Activated T-helper 1 cell treated with anti-CD3 and anti-CD28 coated beads, Interleukin-12 subunit alpha, Interleukin-12 subunit beta, Interleukin-2, Interleukin-4 antibody, amounts not matched to agents 30 ng/mL and 10 ng/mL and 1 ng/mL, durations not matched to agents 14 hours and 24 hours and 36 hours (primary cell): ENCODE measurements at regions of chr11 and their contacts with region 1.

Region 1: DNA sequence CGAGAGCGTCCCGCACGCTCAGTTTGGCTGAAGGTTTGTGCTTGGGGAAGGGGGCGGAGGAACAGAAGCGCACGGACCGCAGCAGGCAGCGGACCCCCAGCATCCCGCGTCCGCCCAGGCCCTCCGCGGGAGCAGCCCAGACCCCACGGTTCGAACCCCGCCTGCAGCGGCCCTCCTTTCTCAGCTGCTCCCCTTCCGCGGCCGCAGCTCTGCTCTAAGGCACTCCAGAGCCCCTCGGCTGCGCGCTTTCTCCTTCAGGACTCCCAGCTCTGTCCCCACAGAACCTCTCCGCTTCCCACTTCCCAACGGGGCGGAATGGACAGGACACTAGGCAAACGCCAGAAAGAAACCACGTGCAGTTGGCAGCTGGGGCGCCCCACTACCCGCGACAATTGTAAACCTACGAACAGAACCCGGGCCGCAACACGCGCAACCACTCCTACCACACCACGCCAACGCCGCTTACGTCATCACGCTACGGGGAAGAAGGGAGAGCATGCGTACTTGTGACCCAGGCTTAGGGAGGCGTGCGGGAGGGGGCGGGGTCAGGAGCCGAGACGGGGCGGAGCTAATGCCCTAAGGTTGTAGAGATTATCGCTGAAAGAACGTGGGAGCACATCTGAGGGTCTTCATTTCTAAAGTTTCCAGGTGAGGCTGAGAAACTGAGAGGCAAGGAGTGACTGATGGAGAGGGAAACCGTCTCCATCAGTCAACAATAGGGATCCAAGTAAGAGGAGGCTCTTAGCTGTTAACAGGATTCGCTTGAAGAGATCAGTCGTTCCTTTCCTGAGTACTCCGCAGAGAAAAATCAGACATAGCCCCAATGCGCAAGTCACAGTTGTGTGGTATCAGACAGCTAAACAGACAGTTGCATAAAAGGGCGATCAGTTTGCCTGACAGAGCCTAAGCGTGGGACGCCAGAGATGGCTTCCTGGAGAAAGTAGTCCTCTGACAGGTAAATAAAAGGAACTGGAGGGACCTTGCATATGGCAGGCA is at the start of gene NARS2:
- DNase-seq: peak; percentile 95
- H3K4me3 Mint-ChIP-seq: peak within 1 kb of the TSS; percentile 90
- H3K27ac Mint-ChIP-seq: peak within 1 kb of the TSS; percentile 86
- H3K4me1 Mint-ChIP-seq: peaks cover 40% of the 10 kb centered on the region
- H3K27me3 Mint-ChIP-seq: peaks cover 7% of the 10 kb centered on the region
- total RNA-seq, gene NARS2: 38.2 and 38.7 TPM in 2 replicates

Region 2: DNA sequence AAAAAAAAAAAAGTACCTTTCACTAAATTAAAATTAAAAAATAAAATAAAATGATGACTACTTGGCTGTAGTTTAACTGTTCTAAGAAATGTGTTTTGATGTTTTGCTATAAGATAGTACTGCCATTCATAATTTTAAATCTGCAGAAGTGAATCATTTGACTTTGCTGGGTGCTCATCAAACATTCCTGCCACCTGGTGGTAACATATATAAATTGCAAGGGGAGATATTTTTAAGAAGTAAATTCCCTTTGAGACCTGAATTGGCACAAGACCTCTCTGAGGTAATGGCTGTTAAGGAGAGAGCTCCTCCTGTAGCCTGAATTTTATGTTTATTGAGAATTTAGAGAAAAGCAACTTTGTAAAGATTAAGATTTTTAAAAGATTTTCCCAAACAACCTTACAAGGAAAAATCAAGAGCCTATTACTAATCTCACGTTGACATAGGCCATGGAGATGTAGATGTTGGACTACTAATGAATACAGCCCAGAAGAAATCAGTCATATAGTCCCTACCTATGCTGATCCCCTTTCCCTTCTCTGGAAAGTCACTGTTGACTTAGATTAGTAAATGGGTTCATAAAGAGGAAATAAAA is 11.9 kb after region 1 on chr11:
- intact Hi-C with region 1: loop called (anchors 1 kb)
- DNase-seq: no peak
- H3K4me3 Mint-ChIP-seq: no peak overlapping the region
- H3K27ac Mint-ChIP-seq: no peak overlapping the region
- H3K4me1 Mint-ChIP-seq: no peaks in the 10 kb centered on the region
- H3K27me3 Mint-ChIP-seq: peaks cover 16% of the 10 kb centered on the region

Region 3: GRCh38 chr11:78698612-78699011 is 123.9 kb after region 1 on chr11:
- intact Hi-C with region 1: no loop called
- DNase-seq: no peak
- H3K4me3 Mint-ChIP-seq: no peak overlapping the region
- H3K27ac Mint-ChIP-seq: peak overlapping the region; percentile 59
- H3K4me1 Mint-ChIP-seq: no peaks in the 10 kb centered on the region
- H3K27me3 Mint-ChIP-seq: peaks cover 4% of the 10 kb centered on the region

Region 4: DNA sequence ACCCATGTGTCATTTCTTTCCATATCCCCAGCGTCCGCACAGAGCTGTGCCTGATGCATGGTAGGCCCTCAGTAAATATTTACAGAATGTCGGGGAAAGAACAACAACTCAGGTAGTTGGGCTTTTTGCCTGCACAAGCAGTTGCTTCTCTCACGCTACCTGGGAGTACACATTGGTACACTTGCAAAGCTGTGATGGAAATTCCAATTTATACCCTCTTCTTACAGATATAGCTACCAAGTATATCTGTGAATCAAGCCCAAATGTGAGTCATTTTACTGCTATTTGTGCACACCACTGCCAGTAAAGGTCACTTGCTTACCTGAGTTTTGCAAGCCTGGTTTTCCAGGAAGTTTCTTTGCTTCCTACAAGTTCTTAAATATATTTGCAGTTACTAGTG is 333.0 kb after region 1 on chr11:
- intact Hi-C with region 1: no loop called
- DNase-seq: no peak
- H3K4me3 Mint-ChIP-seq: no peak overlapping the region
- H3K27ac Mint-ChIP-seq: no peak overlapping the region
- H3K4me1 Mint-ChIP-seq: no peaks in the 10 kb centered on the region
- H3K27me3 Mint-ChIP-seq: no peaks in the 10 kb centered on the region